ENCODE measurements at regions of chr6 and their contacts with region 1.

Region 1: DNA sequence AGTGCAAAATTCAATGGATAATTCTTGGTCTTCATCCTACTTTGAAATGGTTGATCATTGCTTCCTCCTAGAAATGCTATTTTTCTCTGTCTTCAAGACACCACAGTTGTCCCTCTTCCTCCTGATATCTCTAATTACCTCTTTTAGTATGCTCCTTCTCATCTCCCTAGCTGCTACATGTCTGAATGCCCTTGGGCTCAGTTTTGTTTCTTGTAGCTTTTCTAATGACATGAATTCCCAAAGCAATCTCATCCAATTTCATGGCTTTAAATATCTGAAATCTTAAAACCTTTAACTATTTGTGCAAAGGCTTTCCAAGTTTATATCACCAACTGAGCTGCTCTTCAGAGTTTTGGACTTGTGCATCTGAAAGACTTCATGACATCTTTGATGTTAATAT is 120.2 kb upstream of the RGS17 start:
- DNase-seq: no peak
- H3K4me3 ChIP-seq: no peak overlapping the region
- CTCF ChIP-seq: no peak
- POLR2A ChIP-seq: no peak

Region 2: DNA sequence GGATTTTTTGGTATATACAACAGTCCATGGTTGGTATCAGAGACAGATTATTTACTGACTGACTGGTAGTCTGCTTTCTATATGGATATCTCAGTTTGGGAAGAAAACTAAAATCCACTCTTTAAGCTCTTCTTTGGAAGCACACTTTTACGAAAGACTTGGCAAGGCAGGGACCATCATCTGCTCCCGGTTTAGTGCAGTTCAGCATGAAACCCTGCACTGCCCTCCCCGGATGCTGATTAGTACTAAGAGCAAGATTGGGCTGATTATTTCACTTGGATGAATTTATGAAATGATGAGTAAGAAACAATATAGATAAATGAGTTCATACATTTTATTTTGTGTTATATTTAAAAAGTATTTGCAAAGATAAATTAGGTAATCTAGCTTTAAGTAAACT is 176.6 kb before region 1 on chr6:
- intact Hi-C with region 1: no loop called
- DNase-seq: no peak
- H3K4me3 ChIP-seq: no peak overlapping the region
- CTCF ChIP-seq: no peak
- POLR2A ChIP-seq: no peak

Region 3: GRCh38 chr6:154399097-154399496 is 1147.8 kb after region 1 on chr6:
- intact Hi-C with region 1: loop called (anchors 5 kb)
- DNase-seq: peak in 1 of 2 donors; percentile 0
- H3K4me3 ChIP-seq: no peak overlapping the region
- CTCF ChIP-seq: no peak
- POLR2A ChIP-seq: no peak